Activated CD4-positive, alpha-beta T cell treated with anti-CD3 and anti-CD28 coated beads, Interleukin-2, amount 10 ng/mL, durations not matched to agents 24 days and 14 days (primary cell): ENCODE measurements at regions of chrX and their contacts with region 1.

Region 1: GRCh38 chrX:41759817-41760216 is 35.8 kb downstream of the GPR82 start:
- DNase-seq: peak; percentile 64
- H3K4me3 Mint-ChIP-seq: no peak overlapping the region
- H3K27ac Mint-ChIP-seq: no peak overlapping the region
- H3K4me1 Mint-ChIP-seq: peaks cover 3% of the 10 kb centered on the region
- H3K27me3 Mint-ChIP-seq: no peaks in the 10 kb centered on the region

Region 2: GRCh38 chrX:41164449-41164848 is 595.4 kb before region 1 on chrX:
- intact Hi-C with region 1: loop called (anchors 10 kb)
- DNase-seq: no peak
- H3K4me3 Mint-ChIP-seq: no peak overlapping the region
- H3K27ac Mint-ChIP-seq: no peak overlapping the region
- H3K4me1 Mint-ChIP-seq: no peaks in the 10 kb centered on the region
- H3K27me3 Mint-ChIP-seq: no peaks in the 10 kb centered on the region